A673 (cell line): ENCODE measurements at regions of chr3 and their contacts with region 1.

Region 1: DNA sequence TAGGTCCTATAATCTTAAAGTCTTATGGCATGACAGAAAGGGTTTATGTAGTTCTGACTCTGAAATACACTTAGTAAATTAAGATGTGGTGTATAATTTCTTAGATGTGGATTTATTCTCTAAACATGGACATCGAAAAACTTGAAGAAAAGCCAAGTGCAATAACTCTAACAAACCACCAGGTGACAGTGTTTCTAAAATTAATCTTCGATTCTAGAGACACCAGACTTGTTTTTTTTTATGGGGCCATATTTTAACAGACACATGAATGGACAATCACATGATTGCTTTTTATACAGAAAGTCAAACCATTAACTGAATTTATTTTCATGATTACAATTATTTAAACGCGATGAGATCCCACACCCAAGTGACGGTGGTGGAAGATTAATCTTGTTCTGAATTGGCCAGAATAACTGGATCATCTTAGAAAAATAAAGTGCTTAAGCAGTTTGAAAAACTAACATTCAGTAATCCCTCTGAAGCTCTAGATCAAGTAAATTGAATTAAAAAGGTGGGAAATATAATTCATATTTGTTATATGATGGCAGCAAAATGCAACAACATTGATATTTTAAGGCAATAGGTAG is 305.1 kb downstream of the LSAMP start:
- DNase-seq: peak; percentile 80
- H3K4me3 ChIP-seq: no peak overlapping the region
- H3K27ac ChIP-seq: no peak overlapping the region
- H3K4me1 ChIP-seq: peaks cover 17% of the 10 kb centered on the region
- H3K27me3 ChIP-seq: no peaks in the 10 kb centered on the region
- CTCF ChIP-seq: peak; percentile 91

Region 2: DNA sequence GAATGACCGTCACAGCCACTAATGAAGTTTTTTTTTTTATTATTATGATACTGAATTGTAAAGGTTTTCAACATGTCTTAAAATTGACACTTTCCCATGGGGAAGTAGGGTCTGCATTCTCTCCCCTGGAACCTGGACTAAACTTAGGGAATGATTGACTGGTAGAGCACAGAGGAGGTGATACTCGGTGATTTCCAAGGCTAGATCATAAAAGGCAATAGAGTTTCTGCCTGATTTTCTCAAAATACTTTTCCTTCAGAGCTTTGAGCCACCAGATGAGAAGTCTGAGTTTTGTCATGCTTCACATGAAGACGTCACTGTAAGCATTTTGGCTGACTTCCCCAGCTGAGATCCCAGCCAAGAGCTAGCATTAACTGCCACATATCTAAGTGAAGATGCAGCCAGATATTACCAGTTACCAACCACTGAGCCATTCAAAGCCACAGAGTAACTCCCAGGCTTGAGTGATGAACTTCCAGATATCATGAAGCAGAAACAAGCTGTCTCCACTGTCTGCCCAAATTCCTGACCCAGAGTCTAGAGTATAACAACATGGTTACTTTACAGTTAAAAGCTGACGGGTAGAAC is 199.3 kb after region 1 on chr3:
- CTCF ChIA-PET with region 1: no interaction called
- POLR2A ChIA-PET with region 1: no interaction called
- intact Hi-C with region 1: loop called (anchors 5 kb)
- DNase-seq: peak; percentile 65
- H3K4me3 ChIP-seq: no peak overlapping the region
- H3K27ac ChIP-seq: peak overlapping the region; percentile 14
- H3K4me1 ChIP-seq: peaks cover 26% of the 10 kb centered on the region
- H3K27me3 ChIP-seq: no peaks in the 10 kb centered on the region
- CTCF ChIP-seq: no peak

Region 3: GRCh38 chr3:116453666-116454346 is 313.6 kb after region 1 on chr3:
- CTCF ChIA-PET with region 1: no interaction called
- POLR2A ChIA-PET with region 1: no interaction called
- intact Hi-C with region 1: loop called (anchors 5 kb)
- DNase-seq: peak; percentile 37
- H3K4me3 ChIP-seq: no peak overlapping the region
- H3K27ac ChIP-seq: no peak overlapping the region
- H3K4me1 ChIP-seq: no peaks in the 10 kb centered on the region
- H3K27me3 ChIP-seq: no peaks in the 10 kb centered on the region
- CTCF ChIP-seq: peak; percentile 61